GM12878 (cell line): ENCODE measurements at regions of chr6 and their contacts with region 1.

Region 1: DNA sequence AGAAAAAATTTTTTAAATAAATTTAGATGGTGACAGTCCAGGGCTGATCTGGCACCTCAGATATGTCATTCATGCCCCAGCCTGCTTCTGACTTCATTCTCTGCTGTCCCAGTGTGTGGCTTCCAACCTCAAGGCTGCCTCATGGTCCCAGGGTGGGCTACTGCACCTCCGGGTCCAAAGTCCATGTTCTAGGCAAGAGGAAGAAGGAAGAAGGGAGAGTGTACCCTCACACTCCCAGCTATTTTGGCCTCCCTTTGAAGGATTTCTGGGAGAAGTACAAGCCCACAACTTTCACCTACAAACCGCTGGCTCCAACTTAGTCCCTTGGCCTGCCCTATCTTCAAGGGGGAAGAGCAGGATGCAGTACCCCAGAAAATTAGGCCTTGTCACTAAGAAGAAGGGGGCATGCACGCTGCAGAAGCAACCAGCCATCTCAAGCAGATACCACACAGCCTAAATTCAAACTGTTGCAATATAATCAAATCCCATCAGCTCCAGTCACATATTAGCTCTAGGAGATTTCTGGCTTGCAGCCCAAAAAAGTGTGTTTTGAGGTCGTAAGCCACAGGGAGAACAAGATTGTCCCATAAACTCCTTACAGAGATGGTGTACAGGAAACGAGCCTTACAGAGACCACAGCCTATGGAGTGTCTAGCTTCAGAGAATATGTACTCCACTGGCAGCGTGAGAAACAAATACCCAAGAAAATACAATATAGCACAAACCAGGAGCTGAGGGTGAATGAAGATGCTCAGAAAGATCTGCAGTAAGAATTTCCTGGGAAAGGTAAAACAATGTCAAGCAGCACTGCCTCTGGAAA is 906 bp upstream of the BTN3A2 start:
- DNase-seq: peak; percentile 17
- ATAC-seq: peak; percentile 39
- H3K4me3 ChIP-seq: peak overlapping the region; percentile 99
- H3K27ac ChIP-seq: peak overlapping the region; percentile 89
- H3K4me1 ChIP-seq: peaks cover 21% of the 10 kb centered on the region
- H3K27me3 ChIP-seq: no peaks in the 10 kb centered on the region
- CTCF ChIP-seq: no peak
- EP300 ChIP-seq: no peak
- POLR2A ChIP-seq: no peak
- RAD21 ChIP-seq: no peak

Region 2: GRCh38 chr6:26122793-26123674 is 241.1 kb before region 1 on chr6:
- CTCF ChIA-PET with region 1: no interaction called
- POLR2A ChIA-PET with region 1: no interaction called
- RAD21 ChIA-PET with region 1: no interaction called
- SMC1A ChIA-PET with region 1: no interaction called
- in situ Hi-C with region 1: no loop called
- intact Hi-C with region 1: no loop called
- DNase-seq: peak; percentile 99
- ATAC-seq: peak; percentile 71
- H3K4me3 ChIP-seq: peak overlapping the region; percentile 65
- H3K27ac ChIP-seq: peak overlapping the region; percentile 95
- H3K4me1 ChIP-seq: peaks cover 3% of the 10 kb centered on the region; the same call in 1 of the 2 replicates
- H3K27me3 ChIP-seq: no peaks in the 10 kb centered on the region
- CTCF ChIP-seq: no peak
- EP300 ChIP-seq: peak; percentile 85 to 93; a peak in 3 of 4 replicates
- POLR2A ChIP-seq: peak; percentile 86
- RAD21 ChIP-seq: no peak

Region 3: DNA sequence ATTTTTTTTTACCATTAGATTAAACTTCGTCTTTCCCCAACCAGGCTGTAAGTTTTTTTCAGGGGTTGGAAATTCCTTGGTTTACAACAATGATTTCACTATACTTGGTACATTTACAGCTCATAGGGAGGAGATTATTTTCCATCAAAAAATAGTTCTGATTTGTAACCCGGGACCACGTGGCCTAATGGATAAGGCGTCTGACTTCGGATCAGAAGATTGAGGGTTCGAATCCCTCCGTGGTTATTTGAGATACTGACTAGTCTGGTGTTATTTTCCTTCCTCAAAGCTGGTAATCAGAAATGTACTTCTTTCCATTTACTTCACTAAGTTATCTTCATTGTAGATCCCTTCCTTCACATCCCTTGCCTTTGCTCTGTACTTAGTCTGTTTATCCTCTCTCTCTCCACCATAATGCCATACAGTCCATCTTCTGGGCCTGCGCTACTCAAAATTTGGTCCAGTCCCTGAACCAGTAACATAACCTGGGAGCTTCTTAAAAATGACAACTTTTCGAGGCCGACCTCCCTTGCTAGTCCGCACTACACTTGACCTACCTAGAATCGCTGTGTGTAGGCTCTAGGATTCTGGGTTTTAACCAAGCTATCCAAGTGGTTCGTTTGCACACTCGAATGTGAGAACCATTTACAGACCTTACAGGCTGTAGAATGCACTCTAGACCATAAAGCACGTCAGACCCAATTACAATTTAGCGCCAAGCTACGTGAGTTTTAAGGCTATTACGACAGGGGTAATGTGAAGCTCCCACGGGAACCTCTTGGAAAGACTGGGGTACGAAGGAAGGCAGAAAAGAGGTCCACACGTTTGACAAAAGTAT is 41.2 kb before region 1 on chr6:
- CTCF ChIA-PET with region 1: interaction called, 6 read pairs
- POLR2A ChIA-PET with region 1: no interaction called
- RAD21 ChIA-PET with region 1: no interaction called
- SMC1A ChIA-PET with region 1: interaction called, 10 read pairs
- in situ Hi-C with region 1: no loop called
- intact Hi-C with region 1: no loop called
- DNase-seq: peak; percentile 87
- ATAC-seq: peak; percentile 58
- H3K4me3 ChIP-seq: peak overlapping the region; percentile 69
- H3K27ac ChIP-seq: no peak overlapping the region
- H3K4me1 ChIP-seq: peaks cover 7% of the 10 kb centered on the region
- H3K27me3 ChIP-seq: no peaks in the 10 kb centered on the region
- CTCF ChIP-seq: no peak
- EP300 ChIP-seq: no peak; a peak in 1 of 4 replicates
- POLR2A ChIP-seq: no peak
- RAD21 ChIP-seq: no peak

Region 4: GRCh38 chr6:26383624-26384417 is 19.7 kb after region 1 on chr6:
- CTCF ChIA-PET with region 1: interaction called, 6 read pairs
- POLR2A ChIA-PET with region 1: interaction called, 10 read pairs
- RAD21 ChIA-PET with region 1: interaction called, 5 read pairs
- SMC1A ChIA-PET with region 1: interaction called, 15 read pairs
- in situ Hi-C with region 1: no loop called
- intact Hi-C with region 1: no loop called
- DNase-seq: no peak
- ATAC-seq: peak; percentile 70
- H3K4me3 ChIP-seq: peak overlapping the region; percentile 89
- H3K27ac ChIP-seq: peak overlapping the region; percentile 86
- H3K4me1 ChIP-seq: peaks cover 31% of the 10 kb centered on the region
- H3K27me3 ChIP-seq: no peaks in the 10 kb centered on the region
- CTCF ChIP-seq: no peak
- EP300 ChIP-seq: no peak
- POLR2A ChIP-seq: no peak
- RAD21 ChIP-seq: no peak

Region 5: GRCh38 chr6:26445934-26446667 is 82.0 kb after region 1 on chr6:
- CTCF ChIA-PET with region 1: no interaction called
- POLR2A ChIA-PET with region 1: interaction called, 3 read pairs
- RAD21 ChIA-PET with region 1: interaction called, 3 read pairs
- SMC1A ChIA-PET with region 1: interaction called, 4 read pairs
- in situ Hi-C with region 1: no loop called
- intact Hi-C with region 1: loop called (anchors 5 kb)
- DNase-seq: peak; percentile 76
- ATAC-seq: peak; percentile 98
- H3K4me3 ChIP-seq: peak overlapping the region; percentile 19; the same call in 1 of the 2 replicates
- H3K27ac ChIP-seq: peak overlapping the region; percentile 58
- H3K4me1 ChIP-seq: peaks cover 21% of the 10 kb centered on the region
- H3K27me3 ChIP-seq: no peaks in the 10 kb centered on the region
- CTCF ChIP-seq: no peak
- EP300 ChIP-seq: peak in 1 of 2 experiments; percentile 65; a peak in 1 of 4 replicates
- POLR2A ChIP-seq: no peak
- RAD21 ChIP-seq: no peak